Left colon (tissue), 2 donors: ENCODE measurements at regions of chr5 and their contacts with region 1.

Region 1: DNA sequence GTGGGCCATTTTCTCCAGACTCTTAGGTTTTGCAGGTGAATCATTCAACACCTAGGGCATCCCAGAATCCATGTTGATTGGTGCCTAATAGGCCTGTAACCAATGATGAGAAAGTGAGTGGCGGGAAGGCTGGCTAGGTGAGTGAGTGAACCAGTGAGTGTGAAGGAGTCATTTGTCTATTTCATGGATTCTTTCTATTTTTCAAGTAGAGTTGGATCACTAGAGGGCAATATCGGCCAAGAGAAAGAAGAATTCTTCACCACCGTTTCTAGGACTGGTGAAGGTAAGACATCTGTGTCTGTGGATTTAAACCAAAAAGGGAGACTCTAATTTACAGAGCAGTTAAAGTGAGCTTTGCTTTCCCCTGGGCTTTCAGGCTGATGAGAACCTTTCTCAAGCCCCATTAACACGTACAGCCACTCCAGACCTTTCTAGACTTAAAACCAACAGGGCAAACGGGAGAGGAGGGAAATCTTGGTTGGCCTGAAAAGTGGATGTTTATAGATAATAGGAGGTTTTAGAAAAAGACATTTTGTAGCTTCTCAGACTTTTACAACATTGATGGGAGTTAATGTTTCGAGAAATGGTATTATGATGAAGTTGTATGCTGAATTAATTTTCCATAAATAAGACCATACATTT is 114.3 kb upstream of the IL12B start:
- DNase-seq: no peak
- ATAC-seq: peak; percentile 33

Region 2: DNA sequence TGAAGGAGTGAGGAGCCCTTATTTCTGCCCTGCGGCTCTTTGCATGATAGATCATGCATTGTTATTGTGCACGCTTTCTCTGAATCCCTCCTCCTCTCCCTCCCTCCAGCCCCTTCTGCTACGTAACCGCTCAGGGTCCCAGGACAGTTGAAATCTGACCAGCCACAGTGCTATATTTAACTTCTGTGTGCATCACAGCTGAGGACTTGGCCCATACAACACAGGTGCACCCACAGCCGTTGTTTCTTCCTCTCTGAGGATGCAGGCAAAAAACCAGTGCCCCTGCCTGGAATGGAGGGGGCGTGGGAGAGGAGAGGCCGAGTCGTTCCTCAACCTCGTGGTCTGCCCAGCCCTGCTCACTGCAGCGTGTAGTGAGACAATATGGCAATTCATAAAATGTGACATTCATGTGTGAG is 1250.0 kb before region 1 on chr5:
- intact Hi-C with region 1: no loop called
- DNase-seq: no peak
- ATAC-seq: no peak

Region 3: GRCh38 chr5:159660401-159660800 is 215.8 kb after region 1 on chr5:
- intact Hi-C with region 1: no loop called
- DNase-seq: no peak
- ATAC-seq: no peak

Region 4: GRCh38 chr5:159732220-159732619 is 287.7 kb after region 1 on chr5:
- intact Hi-C with region 1: no loop called
- DNase-seq: no peak
- ATAC-seq: no peak

Region 5: GRCh38 chr5:159915904-159916840 is 471.6 kb after region 1 on chr5 and contains the start of gene ADRA1B:
- intact Hi-C with region 1: loop called in 1 of 2 experiments (anchors 10 kb)
- DNase-seq: peak; percentile 53 to 77
- ATAC-seq: peak; percentile 84
- total RNA-seq, gene ADRA1B: 1.1 to 2.5 TPM

Region 6: GRCh38 chr5:159987031-159987674 is 542.6 kb after region 1 on chr5:
- intact Hi-C with region 1: loop called in 1 of 2 experiments (anchors 10 kb)
- DNase-seq: peak; percentile 80 to 89
- ATAC-seq: peak; percentile 100